ENCODE measurements at regions of chr7 and their contacts with region 1.

Region 1: GRCh38 chr7:106793015-106793975 is 71.8 kb upstream of the PIK3CG start:
- DNase-seq: no peak
- ATAC-seq: peak; percentile 60
- H3K4me3 Mint-ChIP-seq: no peak overlapping the region
- H3K27ac Mint-ChIP-seq: no peak overlapping the region
- H3K4me1 Mint-ChIP-seq: peaks cover 2% of the 10 kb centered on the region
- H3K27me3 Mint-ChIP-seq: peaks cover 4% of the 10 kb centered on the region
- CTCF ChIP-seq: peak; percentile 92

Region 2: DNA sequence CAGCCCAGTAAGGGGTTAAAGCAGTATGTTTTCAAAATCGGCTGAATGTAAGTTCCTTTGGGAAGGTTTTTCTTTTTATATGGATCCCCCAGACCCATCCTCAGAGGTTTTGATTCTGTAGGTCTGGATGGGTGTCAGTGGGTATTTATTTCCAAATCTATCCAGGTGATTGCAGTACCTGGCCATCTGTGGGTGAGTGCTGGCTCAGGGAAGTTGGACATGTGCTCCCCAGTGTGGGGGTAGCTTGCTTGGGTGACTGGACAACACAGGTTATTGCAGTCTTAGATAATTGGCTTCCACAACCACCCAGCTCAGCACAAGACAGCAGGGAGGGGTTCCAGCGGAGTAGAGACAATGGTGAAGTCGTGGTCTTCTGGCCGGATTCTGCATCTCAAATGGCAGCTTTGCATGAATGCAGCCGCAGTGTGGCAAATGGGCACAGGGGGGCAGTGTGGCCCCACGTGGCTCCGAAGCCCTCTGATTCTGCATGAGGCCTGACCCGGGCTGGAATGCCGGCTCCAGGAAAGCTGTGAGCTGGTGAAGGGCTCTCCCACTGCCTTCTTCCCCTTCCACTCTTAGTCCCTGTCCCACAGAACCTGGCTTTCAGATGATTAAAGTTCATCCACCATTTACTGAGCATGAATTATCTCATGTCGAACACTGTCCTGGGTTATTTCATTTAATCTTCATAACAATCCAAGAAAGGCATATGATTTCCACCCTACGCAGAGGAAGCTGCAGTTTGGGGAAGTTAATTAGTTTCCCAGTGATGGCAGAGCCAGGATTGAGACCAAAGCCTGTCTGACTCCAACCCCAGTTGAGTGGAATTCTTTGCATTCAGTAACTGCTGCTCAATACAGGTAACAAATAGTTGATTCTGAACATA is 616.6 kb before region 1 on chr7:
- CTCF ChIA-PET with region 1: interaction called, 4 read pairs
- POLR2A ChIA-PET with region 1: no interaction called
- intact Hi-C with region 1: loop called (anchors 5 kb)
- DNase-seq: peak; percentile 64
- ATAC-seq: peak; percentile 91
- H3K4me3 Mint-ChIP-seq: no peak overlapping the region
- H3K27ac Mint-ChIP-seq: no peak overlapping the region
- H3K4me1 Mint-ChIP-seq: peaks cover 11% of the 10 kb centered on the region
- H3K27me3 Mint-ChIP-seq: peaks cover 4% of the 10 kb centered on the region
- CTCF ChIP-seq: peak; percentile 41

Region 3: DNA sequence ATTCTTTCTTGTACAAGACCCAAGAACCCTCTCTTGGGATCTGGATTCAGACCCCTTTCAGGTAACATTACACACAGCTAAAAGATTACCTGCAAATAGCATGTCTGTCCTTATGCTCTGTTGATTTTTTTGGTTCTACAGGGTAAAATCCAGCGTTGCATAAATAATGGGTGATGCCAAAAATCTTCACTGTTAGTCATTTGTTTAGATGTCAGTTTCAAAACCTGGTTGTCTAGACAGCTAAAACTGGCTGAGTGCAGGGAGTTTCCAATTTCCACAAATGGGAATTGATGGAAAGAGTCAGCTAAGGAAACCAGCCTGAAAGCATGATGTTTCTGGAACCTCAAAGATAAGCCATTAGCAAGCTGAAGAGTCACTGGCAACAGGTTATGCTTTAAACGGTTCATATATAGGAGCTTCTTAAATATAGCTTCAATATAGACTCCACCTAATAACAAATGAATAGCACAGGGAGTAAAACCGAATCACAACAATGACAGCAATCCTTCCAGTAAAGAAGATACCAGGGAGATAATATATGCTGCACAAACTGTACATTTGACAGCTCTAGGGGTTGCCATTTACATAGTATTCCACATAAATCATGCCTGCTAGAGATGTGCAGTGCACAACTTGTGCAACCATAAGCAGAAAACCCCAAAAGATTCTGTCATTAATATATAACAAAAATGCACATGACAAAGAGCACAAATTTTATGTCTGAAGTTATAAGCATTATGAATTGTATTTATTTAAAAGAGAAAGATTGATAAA is 152.7 kb before region 1 on chr7:
- CTCF ChIA-PET with region 1: no interaction called
- POLR2A ChIA-PET with region 1: no interaction called
- intact Hi-C with region 1: no loop called
- DNase-seq: no peak
- ATAC-seq: no peak
- H3K4me3 Mint-ChIP-seq: no peak overlapping the region
- H3K27ac Mint-ChIP-seq: no peak overlapping the region
- H3K4me1 Mint-ChIP-seq: peaks cover 23% of the 10 kb centered on the region
- H3K27me3 Mint-ChIP-seq: peaks cover under 1% of the 10 kb centered on the region
- CTCF ChIP-seq: no peak

Region 4: DNA sequence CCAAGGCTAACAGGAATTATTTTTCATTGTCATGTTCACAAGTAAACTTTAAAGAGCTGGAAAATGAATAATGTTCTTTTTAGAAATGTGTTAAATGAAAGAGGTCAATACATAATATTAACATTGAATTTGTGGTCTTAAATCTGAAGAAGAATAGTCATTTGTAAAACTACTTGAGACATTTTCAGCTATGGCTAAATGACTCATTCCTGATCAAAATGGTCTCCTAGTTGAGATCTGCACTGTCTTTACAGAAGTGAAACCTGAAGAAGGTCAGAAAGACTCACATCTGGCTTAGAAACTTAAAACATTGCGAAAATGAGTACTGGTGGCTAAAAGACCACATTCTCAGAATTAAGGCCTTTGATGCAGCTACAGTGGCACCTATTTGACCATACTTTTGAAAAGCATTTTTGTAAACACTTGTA is 77.7 kb after region 1 on chr7:
- CTCF ChIA-PET with region 1: interaction called, 6 read pairs
- POLR2A ChIA-PET with region 1: no interaction called
- intact Hi-C with region 1: loop called (anchors 1 kb)
- DNase-seq: no peak
- ATAC-seq: peak; percentile 77
- H3K4me3 Mint-ChIP-seq: peak overlapping the region; percentile 74
- H3K27ac Mint-ChIP-seq: peak overlapping the region; percentile 86
- H3K4me1 Mint-ChIP-seq: peaks cover 77% of the 10 kb centered on the region
- H3K27me3 Mint-ChIP-seq: no peaks in the 10 kb centered on the region
- CTCF ChIP-seq: no peak

Region 5: DNA sequence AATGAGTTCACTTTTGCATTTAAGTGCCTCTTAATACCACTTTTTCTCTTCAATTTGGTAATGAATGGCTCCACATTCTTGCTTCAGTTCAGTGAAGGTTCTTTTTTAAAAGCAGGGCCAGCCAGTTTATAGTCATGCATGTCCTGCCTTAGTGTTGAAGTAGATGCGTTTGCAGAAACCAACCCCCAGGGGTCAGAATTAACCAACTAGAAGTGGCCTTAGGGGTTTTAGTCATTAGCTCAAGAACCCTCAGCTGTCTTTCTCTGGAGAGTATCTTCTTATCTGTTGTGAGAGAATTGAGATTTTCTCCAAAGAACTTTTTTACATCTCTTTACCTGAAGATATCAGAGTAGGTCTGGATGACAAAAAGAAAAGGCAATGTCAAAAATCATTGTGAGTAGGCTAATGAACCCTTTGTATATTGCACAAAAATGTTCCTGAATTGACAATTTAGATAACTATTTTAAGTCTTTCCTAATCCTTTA is 154.0 kb after region 1 on chr7:
- CTCF ChIA-PET with region 1: interaction called, 16 read pairs
- POLR2A ChIA-PET with region 1: no interaction called
- intact Hi-C with region 1: loop called (anchors 1 kb)
- DNase-seq: no peak
- ATAC-seq: peak; percentile 62
- H3K4me3 Mint-ChIP-seq: no peak overlapping the region
- H3K27ac Mint-ChIP-seq: no peak overlapping the region
- H3K4me1 Mint-ChIP-seq: no peaks in the 10 kb centered on the region
- H3K27me3 Mint-ChIP-seq: no peaks in the 10 kb centered on the region
- CTCF ChIP-seq: no peak

Region 6: GRCh38 chr7:107213193-107213788 is 420.0 kb after region 1 on chr7:
- CTCF ChIA-PET with region 1: no interaction called
- POLR2A ChIA-PET with region 1: no interaction called
- intact Hi-C with region 1: no loop called
- DNase-seq: no peak
- ATAC-seq: no peak
- H3K4me3 Mint-ChIP-seq: no peak overlapping the region
- H3K27ac Mint-ChIP-seq: no peak overlapping the region
- H3K4me1 Mint-ChIP-seq: no peaks in the 10 kb centered on the region
- H3K27me3 Mint-ChIP-seq: no peaks in the 10 kb centered on the region
- CTCF ChIP-seq: no peak

Region 7: DNA sequence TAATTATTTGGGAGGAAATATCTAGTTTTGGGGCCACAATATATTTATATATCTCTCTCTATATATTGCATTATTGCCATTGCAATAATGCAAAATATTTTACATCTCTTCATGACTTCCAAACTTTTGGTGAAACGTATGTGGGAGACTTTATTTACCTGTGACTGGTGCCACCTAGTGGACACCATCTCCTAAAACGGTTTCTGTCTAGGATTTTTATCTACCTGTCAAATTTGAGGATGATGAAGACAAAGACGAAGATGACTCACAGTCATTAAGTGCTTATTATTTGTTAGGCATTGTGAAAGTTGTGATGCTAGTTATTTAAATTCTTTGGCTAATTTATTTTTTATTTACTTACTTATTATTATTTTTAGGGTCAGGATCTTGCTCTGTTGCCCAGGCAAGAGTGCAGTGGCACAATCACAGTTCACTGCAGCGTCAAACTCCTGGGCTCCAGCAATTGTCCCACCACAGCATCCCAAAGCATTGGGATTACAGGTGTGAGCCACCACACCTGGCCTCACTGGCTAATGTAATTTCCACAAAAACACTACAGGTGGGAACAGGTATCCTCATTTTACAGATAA is 932.0 kb after region 1 on chr7:
- CTCF ChIA-PET with region 1: no interaction called
- POLR2A ChIA-PET with region 1: no interaction called
- intact Hi-C with region 1: loop called (anchors 1 kb)
- DNase-seq: no peak
- ATAC-seq: no peak
- H3K4me3 Mint-ChIP-seq: no peak overlapping the region
- H3K27ac Mint-ChIP-seq: no peak overlapping the region
- H3K4me1 Mint-ChIP-seq: no peaks in the 10 kb centered on the region
- H3K27me3 Mint-ChIP-seq: peaks cover 16% of the 10 kb centered on the region
- CTCF ChIP-seq: peak; percentile 48